Dendritic cell treated with granulocyte-macrophage colony-stimulating factor and Interleukin-4, amounts not matched to agents 40 ng/mL and 50 ng/mL, for 4 days (primary cell): ENCODE measurements at regions of chr10 and their contacts with region 1.

Region 1: GRCh38 chr10:73096449-73097304 is at the start of gene P4HA1:
- H3K4me3 Mint-ChIP-seq: peak within 1 kb of the TSS; percentile 92
- H3K27ac Mint-ChIP-seq: peak within 1 kb of the TSS; percentile 95
- H3K4me1 Mint-ChIP-seq: peaks cover 17% of the 10 kb centered on the region
- H3K27me3 Mint-ChIP-seq: no peaks in the 10 kb centered on the region

Region 2: DNA sequence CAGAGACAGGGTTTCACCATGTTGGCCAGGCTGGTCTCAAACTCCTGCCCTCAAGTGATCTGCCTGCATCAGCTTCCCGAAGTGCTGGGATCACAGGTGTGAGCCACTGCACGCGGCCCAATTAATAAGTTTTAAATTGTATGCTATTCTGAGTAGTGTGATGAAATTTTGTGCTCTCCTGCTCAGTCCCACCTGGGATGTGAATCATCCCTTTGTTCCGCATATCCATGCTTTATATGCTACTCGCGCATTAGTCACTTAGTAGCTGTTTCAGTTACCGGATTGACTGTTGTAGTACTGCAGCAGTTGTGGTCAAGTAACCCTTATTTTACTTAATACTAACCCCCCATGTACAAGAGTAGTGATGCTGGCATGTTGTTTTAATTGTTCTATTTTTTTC is 250.5 kb before region 1 on chr10:
- intact Hi-C with region 1: no loop called
- H3K4me3 Mint-ChIP-seq: no peak overlapping the region
- H3K27ac Mint-ChIP-seq: no peak overlapping the region
- H3K4me1 Mint-ChIP-seq: peaks cover 8% of the 10 kb centered on the region
- H3K27me3 Mint-ChIP-seq: no peaks in the 10 kb centered on the region

Region 3: DNA sequence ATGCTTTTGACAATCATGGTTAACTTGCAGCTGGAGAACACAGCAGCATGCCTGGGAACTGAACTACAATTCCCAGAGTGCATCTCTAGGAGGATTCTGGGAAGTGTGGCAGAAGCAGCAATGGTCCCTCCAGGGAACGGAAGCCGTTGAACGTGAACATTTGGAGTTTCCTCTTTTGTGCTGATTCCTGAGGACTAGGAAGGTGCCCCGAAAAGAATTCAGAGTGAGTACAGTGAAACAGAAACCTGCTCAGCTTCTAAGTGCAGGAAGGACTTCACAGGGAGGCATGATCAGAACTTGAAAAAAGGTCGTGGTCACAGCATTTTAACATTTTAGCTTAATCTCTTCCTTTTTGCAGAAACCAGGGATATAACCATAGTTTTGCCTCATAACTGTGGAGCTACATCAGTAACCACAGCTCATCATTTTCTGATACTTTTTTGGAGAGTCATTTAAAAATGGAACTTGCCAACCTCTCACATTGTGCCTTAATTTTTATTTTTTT is 13.7 kb after region 1 on chr10 and contains the start of gene NUDT13:
- intact Hi-C with region 1: loop called (anchors 2 kb)
- H3K4me3 Mint-ChIP-seq: peak within 1 kb of the TSS; percentile 79
- H3K27ac Mint-ChIP-seq: peak within 1 kb of the TSS; percentile 91
- H3K4me1 Mint-ChIP-seq: no peaks in the 10 kb centered on the region
- H3K27me3 Mint-ChIP-seq: no peaks in the 10 kb centered on the region

Region 4: GRCh38 chr10:73167783-73168464 is 71.2 kb after region 1 on chr10 and contains the starts of genes ECD and FAM149B1:
- intact Hi-C with region 1: loop called (anchors 5 kb)
- H3K4me3 Mint-ChIP-seq: peak within 1 kb of the TSS; percentile 99
- H3K27ac Mint-ChIP-seq: peak within 1 kb of the TSS; percentile 97
- H3K4me1 Mint-ChIP-seq: peaks cover 26% of the 10 kb centered on the region
- H3K27me3 Mint-ChIP-seq: no peaks in the 10 kb centered on the region